A549 (cell line): ENCODE measurements at regions of chr1 and their contacts with region 1.

Region 1: DNA sequence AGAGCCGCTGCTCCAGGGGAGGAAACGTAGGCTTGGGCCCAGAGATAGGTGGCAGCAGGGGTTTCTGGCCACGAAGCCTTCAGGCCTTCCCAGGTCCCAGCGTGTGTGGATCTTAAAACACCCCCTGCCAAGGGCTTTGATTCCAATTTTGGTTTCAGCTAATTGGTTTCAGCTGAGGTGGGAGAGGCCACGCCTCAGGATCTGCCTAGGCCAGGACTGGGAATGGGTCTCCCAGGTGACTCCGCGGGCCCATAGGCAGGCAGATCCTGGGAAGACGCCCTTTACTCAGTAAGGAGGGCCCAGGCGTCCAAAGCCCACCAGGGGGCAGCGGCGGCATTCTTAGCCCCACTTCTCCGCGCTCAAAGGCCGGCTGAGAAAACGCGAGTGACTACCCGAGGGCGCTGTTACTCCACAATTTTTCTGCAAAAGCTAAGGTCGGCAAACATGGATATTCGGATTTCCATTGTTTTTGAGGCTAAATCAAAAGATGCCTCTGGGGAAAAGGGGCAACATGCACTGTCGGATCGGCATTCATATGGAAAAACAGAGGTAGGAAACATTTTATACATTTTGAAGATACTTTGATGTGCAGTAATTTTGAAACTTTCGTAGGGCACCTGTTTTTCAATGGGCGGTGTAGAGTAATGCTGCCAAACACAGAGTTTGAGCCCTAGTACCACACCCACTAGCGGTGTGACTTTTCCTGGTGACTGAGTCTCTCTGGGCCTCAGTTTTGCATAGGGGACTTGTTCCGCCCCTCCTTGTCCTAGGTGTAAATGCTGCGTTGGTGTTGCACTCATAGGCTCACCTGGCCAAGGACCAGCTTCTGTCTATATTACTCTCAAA is 31.8 kb upstream of the BCL10 start:
- DNase-seq: peak; percentile 69 to 84
- ATAC-seq: peak; percentile 98 to 100
- H3K4me3 ChIP-seq: no peak overlapping the region
- H3K27ac ChIP-seq: peak overlapping the region; percentile 59 to 74; a peak in 4 of 6 replicates
- H3K4me1 ChIP-seq: peaks cover 7% of the 10 kb centered on the region; the same call in 2 of the 3 replicates
- CTCF ChIP-seq: peak; percentile 98
- EP300 ChIP-seq: no peak
- POLR2A ChIP-seq: no peak
- RAD21 ChIP-seq: peak; percentile 99

Region 2: DNA sequence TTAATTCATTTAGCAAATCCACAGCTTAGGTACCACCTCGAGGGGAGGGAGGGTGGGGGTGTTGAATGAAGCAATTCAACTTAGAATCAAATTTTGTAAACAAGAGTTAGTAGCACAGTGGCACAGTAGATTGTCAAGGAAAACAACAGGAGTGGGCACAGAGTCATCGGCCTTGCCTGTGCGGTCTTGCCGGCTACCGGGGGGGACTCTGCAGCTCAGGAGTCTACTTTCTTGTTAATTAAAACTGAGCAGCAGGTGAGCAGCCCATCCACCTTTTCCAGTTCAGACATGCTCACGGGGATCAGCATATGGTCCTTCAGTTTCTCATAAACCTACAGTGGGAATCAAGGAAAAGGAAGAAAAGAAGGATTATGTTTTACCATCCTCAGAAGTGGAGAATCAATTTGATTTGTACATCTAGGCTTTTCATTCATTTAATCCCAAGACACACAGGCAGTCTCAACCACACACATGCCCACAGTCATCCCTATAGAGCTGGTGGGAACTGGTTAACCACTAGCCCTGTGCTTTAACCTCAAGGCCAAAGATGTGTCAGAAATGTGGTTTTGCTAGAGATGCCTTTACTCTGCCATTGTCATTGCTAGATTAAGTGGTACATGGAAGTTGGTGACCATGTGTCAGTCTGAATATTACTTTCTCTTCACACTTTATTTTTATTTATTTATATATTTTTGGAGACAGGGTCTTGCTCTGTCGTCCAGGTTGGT is 13.2 kb after region 1 on chr1:
- CTCF ChIA-PET with region 1: interaction called, 18 read pairs
- POLR2A ChIA-PET with region 1: no interaction called
- DNase-seq: no peak
- ATAC-seq: no peak
- H3K4me3 ChIP-seq: no peak overlapping the region
- H3K27ac ChIP-seq: peak overlapping the region; percentile 68 to 88; a peak in 5 of 6 replicates
- H3K4me1 ChIP-seq: peaks cover 74% of the 10 kb centered on the region
- CTCF ChIP-seq: no peak
- EP300 ChIP-seq: no peak
- POLR2A ChIP-seq: no peak
- RAD21 ChIP-seq: no peak

Region 3: GRCh38 chr1:85386068-85386722 is 78.0 kb after region 1 on chr1:
- CTCF ChIA-PET with region 1: interaction called, 16 read pairs
- POLR2A ChIA-PET with region 1: no interaction called
- DNase-seq: no peak
- ATAC-seq: no peak
- H3K4me3 ChIP-seq: no peak overlapping the region
- H3K27ac ChIP-seq: no peak overlapping the region
- H3K4me1 ChIP-seq: no peaks in the 10 kb centered on the region
- CTCF ChIP-seq: no peak
- EP300 ChIP-seq: no peak
- POLR2A ChIP-seq: no peak
- RAD21 ChIP-seq: no peak

Region 4: DNA sequence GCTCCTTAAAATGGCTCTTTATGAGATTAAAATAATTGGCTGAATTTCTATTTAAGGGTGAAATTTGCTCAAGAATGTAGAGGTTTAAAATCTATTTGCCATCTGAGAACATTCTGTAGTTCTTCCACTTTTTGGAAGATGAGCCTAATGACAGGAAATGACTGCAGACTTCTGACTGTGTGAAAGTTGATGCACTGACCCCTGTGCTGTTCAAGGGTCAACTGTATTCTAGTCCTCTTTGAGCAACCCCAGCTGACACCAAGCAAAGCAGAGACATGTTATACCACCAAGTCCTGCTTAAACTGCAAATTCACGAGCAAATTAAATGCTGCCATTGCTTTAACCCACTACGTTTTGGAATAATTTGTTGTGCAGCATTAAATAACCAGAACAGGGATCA is 130.1 kb after region 1 on chr1:
- CTCF ChIA-PET with region 1: no interaction called
- POLR2A ChIA-PET with region 1: no interaction called
- DNase-seq: no peak
- ATAC-seq: no peak
- H3K4me3 ChIP-seq: no peak overlapping the region
- H3K27ac ChIP-seq: no peak overlapping the region
- H3K4me1 ChIP-seq: peaks cover 3% of the 10 kb centered on the region; the same call in 1 of the 3 replicates
- CTCF ChIP-seq: no peak
- EP300 ChIP-seq: no peak
- POLR2A ChIP-seq: no peak
- RAD21 ChIP-seq: no peak

Region 5: DNA sequence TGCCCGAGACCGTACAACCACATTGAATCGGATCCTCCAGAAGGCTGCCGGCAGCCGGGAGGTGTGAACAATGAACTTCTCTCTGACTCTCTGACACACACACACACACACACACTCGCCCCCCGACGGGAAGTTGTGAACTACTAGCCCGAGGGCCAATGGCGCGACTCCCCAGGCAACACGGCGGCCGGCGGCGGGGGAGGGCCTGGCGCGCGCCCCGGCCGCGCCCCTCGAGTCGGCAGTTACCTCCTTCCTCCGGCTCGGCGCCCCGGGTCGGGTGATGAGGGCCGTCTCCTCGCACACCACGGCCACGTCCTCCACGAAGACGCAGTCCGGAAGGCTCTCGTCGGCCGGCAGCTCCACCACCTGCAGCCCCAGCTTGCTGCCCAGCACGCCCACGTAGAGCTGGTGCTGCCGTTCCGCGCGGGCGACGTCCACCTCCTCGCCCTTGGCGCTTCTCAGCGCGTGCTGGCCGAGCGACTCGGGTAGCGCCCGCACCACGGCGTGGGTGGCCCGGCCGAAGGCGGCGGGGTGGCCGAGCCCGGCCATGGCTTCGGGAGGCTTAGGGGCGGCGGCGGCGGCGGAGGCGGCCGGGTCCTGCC is 156.4 kb after region 1 on chr1:
- CTCF ChIA-PET with region 1: interaction called, 37 read pairs
- POLR2A ChIA-PET with region 1: no interaction called
- DNase-seq: peak; percentile 27 to 55
- ATAC-seq: peak; percentile 81 to 83
- H3K4me3 ChIP-seq: peak overlapping the region; percentile 70
- H3K27ac ChIP-seq: peak overlapping the region; percentile 89 to 98
- H3K4me1 ChIP-seq: peaks cover 33% of the 10 kb centered on the region
- CTCF ChIP-seq: no peak
- EP300 ChIP-seq: no peak
- POLR2A ChIP-seq: peak; percentile 24; the same call in 1 of the 2 replicates
- RAD21 ChIP-seq: no peak; a peak in 2 of 5 replicates

Region 6: DNA sequence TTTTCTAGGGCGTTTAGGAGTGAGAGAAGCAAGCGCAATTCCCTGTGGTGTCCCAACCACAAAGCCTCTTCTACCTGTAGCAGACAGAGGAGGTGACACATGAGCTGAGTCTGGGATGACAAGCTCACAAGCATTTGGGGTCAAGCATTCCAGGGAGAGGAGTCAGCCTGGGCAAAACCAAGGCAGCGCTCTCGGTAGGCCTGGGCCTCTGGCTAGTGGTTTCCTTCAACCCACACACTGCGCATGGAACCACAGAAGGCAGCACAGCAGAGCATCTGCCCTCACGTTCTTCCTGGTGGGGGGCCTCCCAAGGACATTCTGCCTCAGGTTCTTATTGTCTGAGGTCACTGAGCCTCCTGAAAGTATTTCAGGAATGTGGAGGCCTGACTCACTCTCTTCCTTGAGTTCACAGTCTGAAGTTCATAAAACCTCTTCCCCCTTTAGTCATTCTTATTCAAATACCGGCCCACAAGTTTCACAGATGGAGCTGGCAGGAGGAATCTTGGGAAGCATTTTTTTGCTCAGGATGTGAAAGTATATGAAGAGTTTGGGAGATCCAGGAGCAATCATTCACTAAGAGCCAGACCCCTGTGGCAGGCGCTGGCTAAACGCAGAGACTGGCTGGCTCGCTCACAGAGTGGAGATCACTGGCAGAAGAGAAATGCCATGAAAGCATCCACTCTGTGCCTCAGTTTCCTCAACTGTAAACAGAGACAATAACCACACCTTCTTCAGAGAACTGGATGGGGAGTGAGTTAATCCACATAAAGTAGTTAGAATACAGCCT is 299.1 kb after region 1 on chr1:
- CTCF ChIA-PET with region 1: interaction called, 22 read pairs
- POLR2A ChIA-PET with region 1: no interaction called
- DNase-seq: peak; percentile 82 to 92
- ATAC-seq: peak; percentile 89 to 90
- H3K4me3 ChIP-seq: no peak overlapping the region
- H3K27ac ChIP-seq: peak overlapping the region; percentile 91 to 92
- H3K4me1 ChIP-seq: peaks cover 73% of the 10 kb centered on the region
- CTCF ChIP-seq: no peak
- EP300 ChIP-seq: peak; percentile 79 to 93; a peak in 4 of 5 replicates
- POLR2A ChIP-seq: no peak
- RAD21 ChIP-seq: peak; percentile 17 to 44; a peak in 3 of 5 replicates

Region 7: DNA sequence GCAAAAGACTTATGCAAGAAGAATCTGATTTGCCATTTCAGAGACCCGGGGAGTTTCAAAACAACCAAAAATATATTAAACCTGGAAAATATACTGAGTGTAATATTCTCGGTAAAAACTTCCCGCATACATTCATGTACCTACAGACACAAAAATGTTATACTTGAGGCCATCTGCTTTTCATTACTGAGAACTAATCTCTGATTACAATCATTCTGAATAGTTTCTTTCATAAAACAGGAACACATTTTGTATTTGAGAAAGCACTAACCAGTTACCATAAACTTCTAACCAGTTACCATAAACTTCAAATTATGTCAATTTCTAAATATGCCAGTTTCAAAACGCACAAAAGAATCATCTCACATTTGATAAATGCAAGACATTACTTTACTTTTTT is 392.2 kb after region 1 on chr1:
- CTCF ChIA-PET with region 1: interaction called, 25 read pairs
- POLR2A ChIA-PET with region 1: no interaction called
- DNase-seq: no peak
- ATAC-seq: no peak
- H3K4me3 ChIP-seq: no peak overlapping the region
- H3K27ac ChIP-seq: no peak overlapping the region
- H3K4me1 ChIP-seq: no peaks in the 10 kb centered on the region
- CTCF ChIP-seq: no peak
- EP300 ChIP-seq: no peak
- POLR2A ChIP-seq: no peak
- RAD21 ChIP-seq: no peak